Left ventricle myocardium superior (tissue), 1 donor: ENCODE measurements at regions of chr4 and their contacts with region 1.

Region 1: DNA sequence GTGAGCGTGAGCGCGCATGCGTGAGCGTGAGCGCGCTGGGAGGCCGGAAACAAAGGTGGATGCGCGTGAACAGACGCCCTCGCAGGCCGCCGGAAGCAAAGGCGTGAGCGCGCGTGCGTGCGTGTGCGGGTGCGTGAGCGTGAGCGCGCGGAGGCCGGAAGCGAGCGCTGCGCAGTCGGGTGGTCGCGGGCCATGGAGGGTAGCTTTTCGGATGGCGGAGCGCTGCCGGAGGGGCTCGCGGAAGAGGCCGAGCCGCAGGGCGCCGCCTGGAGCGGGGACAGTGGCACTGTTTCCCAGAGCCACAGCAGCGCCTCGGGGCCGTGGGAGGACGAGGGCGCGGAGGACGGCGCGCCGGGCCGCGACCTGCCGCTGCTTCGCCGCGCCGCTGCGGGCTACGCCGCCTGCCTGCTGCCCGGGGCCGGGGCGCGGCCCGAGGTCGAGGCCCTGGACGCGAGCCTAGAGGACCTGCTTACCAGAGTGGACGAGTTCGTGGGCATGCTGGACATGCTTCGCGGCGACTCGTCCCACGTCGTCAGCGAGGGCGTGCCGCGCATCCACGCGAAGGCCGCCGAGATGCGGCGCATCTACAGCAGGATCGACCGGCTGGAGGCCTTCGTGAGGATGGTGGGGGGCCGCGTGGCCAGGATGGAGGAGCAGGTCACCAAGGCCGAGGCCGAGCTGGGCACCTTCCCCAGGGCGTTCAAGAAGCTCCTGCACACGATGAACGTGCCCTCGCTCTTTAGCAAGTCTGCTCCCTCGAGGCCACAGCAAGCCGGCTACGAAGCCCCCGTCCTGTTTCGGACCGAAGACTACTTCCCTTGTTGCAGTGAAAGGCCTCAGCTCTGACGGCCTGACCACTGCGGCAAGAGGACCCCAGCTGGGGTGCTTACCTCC is at the start of gene BLOC1S4:
- DNase-seq: peak; percentile 95
- ATAC-seq: peak; percentile 94
- total RNA-seq, gene BLOC1S4: 7.3 TPM

Region 2: DNA sequence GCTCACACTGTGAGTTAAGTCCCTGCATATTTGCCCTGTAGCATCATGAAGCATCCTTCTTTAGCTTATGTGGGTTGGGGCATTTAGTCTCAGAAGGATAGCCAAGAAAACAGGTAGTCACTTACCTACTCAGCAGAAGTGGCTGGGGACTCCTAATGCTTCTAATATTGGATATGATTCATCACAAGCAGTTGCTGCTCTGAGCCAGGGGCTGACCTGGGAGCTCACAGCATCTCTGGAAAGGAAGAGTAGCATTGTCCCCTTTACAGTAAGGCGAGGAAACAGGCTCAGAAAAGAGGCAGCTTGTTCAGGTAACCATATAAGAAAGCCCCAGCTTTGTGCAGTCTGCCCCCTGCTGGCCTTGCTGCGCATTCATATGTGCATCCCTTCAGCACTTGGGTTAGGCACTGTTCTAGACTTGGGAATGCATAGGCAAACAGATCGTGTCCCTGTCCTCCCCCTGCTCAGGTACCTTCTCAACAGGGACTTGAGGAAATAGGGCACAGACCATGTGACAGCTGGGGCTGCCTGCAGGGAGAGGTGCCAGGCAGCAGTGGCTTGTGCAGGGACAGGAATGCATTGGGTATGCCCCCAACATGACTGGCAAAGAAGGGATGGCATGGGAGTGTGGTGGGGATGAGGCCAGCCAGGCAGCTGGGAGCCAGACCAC is 157.7 kb after region 1 on chr4:
- intact Hi-C with region 1: loop called (anchors 5 kb)
- DNase-seq: peak; percentile 86
- ATAC-seq: peak; percentile 63

Region 3: DNA sequence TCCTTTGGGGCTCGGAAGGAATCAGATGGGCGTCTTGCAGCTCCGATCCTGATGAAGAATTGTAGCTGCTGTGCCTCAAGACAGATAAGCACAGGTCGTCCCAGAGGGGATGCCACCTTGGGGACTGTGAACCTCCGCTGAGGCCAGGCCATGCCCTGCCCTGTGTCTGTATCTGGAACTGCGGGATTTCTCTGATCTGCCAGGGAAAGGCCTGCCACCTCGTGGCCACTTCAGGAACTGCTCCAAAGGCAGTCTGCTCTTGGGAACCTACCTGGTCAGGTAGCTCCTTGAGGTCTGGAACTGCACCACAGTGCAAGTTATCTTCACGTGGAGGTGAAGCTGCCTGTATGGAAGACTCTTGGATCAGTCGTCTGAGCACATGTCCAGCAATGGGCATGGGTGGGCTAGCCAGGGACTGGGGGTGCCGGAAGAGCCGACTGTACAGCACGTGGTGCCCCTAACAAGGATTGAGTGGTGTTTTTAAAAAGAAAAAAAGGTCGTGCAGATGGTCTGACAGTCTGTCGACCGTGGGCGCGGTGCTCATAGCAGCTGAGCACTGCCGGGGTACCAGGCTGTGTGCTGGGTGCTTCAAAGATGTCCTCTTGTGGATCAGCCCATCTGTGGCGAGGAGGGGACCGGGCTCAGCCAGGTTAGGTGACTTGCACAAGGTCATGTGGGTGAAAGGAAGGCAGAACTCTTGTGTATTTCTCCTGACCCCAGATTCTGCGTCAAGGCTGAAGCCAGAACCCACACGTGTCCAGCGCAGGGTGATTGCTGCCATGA is 354.7 kb after region 1 on chr4:
- intact Hi-C with region 1: loop called (anchors 10 kb)
- DNase-seq: peak; percentile 86
- ATAC-seq: peak; percentile 4